ENCODE measurements at regions of chr2 and their contacts with region 1.

Region 1: GRCh38 chr2:177195194-177195593 is 17.4 kb upstream of the HNRNPA3 start:
- DNase-seq: no peak
- H3K4me3 ChIP-seq: no peak overlapping the region
- H3K27ac ChIP-seq: no peak overlapping the region
- H3K4me1 ChIP-seq: no peaks in the 10 kb centered on the region
- H3K27me3 ChIP-seq: no peaks in the 10 kb centered on the region
- CTCF ChIP-seq: no peak
- POLR2A ChIP-seq: no peak

Region 2: DNA sequence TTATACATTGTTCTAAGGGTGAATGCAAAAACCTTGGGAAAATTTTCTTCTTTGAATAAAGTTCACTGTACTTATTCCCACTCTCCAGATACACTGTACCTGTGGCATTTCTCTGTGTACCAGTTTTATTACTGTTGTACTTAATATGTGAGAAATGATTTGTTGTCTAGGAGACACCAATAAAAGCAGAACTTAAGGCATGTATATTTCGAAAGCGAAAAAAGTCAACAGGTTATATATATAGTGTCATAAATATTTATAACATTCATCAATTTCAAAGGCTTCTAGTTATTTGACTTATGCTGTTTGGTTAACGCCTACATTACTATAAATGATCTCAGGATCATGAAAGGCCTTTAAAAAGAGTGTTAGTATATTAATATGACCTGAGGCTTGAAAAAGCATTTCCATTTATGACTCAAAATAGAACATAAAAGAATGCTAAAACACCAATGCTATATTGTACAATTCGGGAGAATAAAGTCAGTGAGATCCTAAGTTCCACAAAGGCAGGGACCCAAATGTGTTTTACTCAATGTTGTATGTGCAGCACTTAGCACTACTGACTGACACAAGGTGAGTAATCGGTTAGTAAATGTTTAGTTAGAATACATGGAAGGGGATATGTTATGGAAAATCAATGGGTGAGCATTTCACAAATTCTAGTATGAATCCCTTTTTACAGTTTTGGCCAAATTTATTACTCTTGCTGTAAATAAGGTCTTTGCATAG is 14.8 kb before region 1 on chr2:
- CTCF ChIA-PET with region 1: interaction called, 8 read pairs
- POLR2A ChIA-PET with region 1: no interaction called
- dilution Hi-C with region 1: no loop called
- intact Hi-C with region 1: loop called (anchors 2 kb)
- DNase-seq: no peak
- H3K4me3 ChIP-seq: no peak overlapping the region
- H3K27ac ChIP-seq: no peak overlapping the region
- H3K4me1 ChIP-seq: no peaks in the 10 kb centered on the region
- H3K27me3 ChIP-seq: no peaks in the 10 kb centered on the region
- CTCF ChIP-seq: no peak
- POLR2A ChIP-seq: no peak